HCT116 (cell line): ENCODE measurements at regions of chr2 and their contacts with region 1.

Region 1: DNA sequence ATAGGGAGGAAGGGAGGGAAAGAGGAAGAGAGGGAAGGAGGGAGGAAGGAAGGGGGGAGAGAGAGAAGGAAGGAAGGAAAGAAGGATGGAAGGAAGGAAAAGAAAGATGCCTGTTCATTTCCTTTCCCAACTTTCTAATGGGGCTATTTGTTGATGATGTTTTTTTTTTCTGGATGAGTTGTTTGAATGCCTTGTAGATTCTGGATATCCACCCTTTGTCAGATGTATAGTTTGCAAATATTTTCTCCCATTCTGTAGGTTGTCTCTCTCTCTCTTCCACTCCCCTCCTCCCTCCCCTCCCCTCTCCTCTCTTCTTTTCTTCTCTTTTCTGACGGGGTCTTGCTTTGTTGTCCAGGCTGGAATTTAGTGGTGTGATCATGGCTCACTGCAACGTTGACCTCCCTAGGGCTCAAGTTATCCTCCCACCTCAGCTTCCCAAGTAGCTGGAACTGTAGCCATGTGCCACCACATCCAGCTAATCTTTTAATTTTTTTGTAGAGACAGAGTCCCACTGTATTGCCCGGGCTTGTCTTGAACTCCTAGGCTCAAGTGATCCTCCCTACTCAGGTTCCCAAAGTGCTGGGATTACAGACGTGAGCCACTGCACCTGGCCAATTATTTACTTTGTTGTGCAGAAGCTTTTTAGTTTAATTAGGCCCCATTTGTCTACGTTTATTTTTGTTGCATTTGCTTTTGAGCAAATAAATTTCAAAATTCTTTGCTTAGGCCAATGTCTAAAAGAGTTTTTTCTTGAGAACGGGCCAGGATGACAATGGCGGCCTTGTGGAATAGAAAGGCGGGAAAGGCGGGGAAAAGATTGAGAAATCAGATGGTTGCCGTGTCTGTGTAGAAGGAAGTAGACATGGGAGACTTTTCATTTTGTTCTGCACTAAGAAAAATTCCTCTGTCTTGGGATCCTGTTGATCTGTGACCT is 57.3 kb upstream of the FAM117B start:
- DNase-seq: no peak
- ATAC-seq: no peak
- H3K4me3 ChIP-seq: no peak overlapping the region
- H3K27ac ChIP-seq: no peak overlapping the region
- H3K4me1 ChIP-seq: no peaks in the 10 kb centered on the region
- H3K27me3 ChIP-seq: no peaks in the 10 kb centered on the region
- CTCF ChIP-seq: no peak
- POLR2A ChIP-seq: no peak
- RAD21 ChIP-seq: no peak

Region 2: GRCh38 chr2:202690321-202690900 is 112.9 kb after region 1 on chr2:
- CTCF ChIA-PET with region 1: no interaction called
- POLR2A ChIA-PET with region 1: no interaction called
- RAD21 ChIA-PET with region 1: no interaction called
- intact Hi-C with region 1: no loop called
- DNase-seq: no peak
- ATAC-seq: 0 out of 2 replicates have a peak, but pooled peaks have one; percentile 40
- H3K4me3 ChIP-seq: no peak overlapping the region
- H3K27ac ChIP-seq: no peak overlapping the region
- H3K4me1 ChIP-seq: peaks cover 0 to 8% of the 10 kb centered on the region in 2 experiments; a peak in 2 of 4 replicates
- H3K27me3 ChIP-seq: no peaks in the 10 kb centered on the region
- CTCF ChIP-seq: no peak
- POLR2A ChIP-seq: no peak
- RAD21 ChIP-seq: no peak

Region 3: DNA sequence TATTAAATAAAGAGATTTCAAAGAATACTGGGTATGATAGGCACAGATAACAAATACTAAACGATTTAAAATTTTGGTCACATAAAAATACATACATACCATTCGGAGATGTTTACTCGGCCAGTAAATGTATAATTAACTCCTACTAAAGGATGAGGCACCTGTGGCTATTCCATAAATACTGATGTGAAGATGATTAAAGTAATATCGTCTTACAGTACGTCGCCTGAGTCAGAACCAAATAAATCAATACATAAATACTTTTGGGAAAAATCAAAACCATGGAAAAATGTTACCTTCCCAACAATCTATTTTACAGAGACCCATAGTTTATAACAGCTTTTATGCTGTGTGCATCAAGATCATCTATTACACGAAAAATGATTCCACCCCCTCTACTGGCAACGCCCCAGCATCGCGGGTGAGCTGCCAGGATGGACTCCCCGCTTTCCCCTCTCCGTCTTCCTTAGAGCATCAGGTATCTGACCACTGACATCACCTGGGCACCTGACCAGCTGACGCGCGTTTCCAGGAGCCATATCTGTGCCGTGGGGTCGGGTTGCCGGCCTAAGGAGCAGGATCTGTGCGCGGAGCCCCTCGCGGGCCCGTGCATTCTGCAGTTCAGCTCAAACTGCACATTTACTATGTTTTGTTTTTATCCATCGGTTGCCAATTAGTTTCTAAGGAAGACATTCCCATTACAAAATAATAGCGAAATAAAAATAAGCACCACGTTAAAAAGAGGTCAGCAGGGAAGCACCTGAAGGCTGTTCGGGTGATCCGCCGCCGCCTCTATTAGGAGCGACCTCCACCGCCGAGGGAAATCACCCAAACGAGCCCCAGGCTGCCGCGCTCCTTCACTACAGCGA is 293.1 kb after region 1 on chr2:
- CTCF ChIA-PET with region 1: no interaction called
- POLR2A ChIA-PET with region 1: no interaction called
- RAD21 ChIA-PET with region 1: no interaction called
- intact Hi-C with region 1: loop called (anchors 5 kb)
- DNase-seq: peak; percentile 78
- ATAC-seq: peak; percentile 86
- H3K4me3 ChIP-seq: peak overlapping the region; percentile 61 to 68
- H3K27ac ChIP-seq: peak overlapping the region; percentile 38
- H3K4me1 ChIP-seq: peaks cover 7 to 13% of the 10 kb centered on the region in 2 experiments
- H3K27me3 ChIP-seq: no peaks in the 10 kb centered on the region
- CTCF ChIP-seq: peak; percentile 34 to 59 (median 55); a peak in 5 of 6 replicates
- POLR2A ChIP-seq: peak; percentile 41
- RAD21 ChIP-seq: peak; percentile 52